ENCODE measurements at regions of chr11 and their contacts with region 1.

Region 1: GRCh38 chr11:61814958-61815789 is 1.6 kb downstream of the FADS1 start:
- DNase-seq: peak; percentile 85
- ATAC-seq: peak; percentile 90
- H3K4me3 ChIP-seq: peak overlapping the region; percentile 69 to 91
- H3K27ac ChIP-seq: peak overlapping the region; percentile 95
- H3K4me1 ChIP-seq: peaks cover 17% of the 10 kb centered on the region
- H3K27me3 ChIP-seq: no peaks in the 10 kb centered on the region
- CTCF ChIP-seq: no peak

Region 2: GRCh38 chr11:61797263-61797944 is 17.8 kb before region 1 on chr11:
- CTCF ChIA-PET with region 1: interaction called, 10 read pairs
- POLR2A ChIA-PET with region 1: interaction called, 8 read pairs
- in situ Hi-C with region 1: no loop called
- intact Hi-C with region 1: no loop called
- DNase-seq: peak; percentile 67
- ATAC-seq: no peak
- H3K4me3 ChIP-seq: no peak overlapping the region
- H3K27ac ChIP-seq: 0 out of 2 replicates have a peak overlapping the region, but pooled peaks have one; percentile 27
- H3K4me1 ChIP-seq: peaks cover 9% of the 10 kb centered on the region; the same call in 1 of the 2 replicates
- H3K27me3 ChIP-seq: no peaks in the 10 kb centered on the region
- CTCF ChIP-seq: peak; percentile 82

Region 3: GRCh38 chr11:61827571-61828378 is 12.6 kb after region 1 on chr11 and contains the start of gene FADS2:
- CTCF ChIA-PET with region 1: no interaction called
- POLR2A ChIA-PET with region 1: interaction called, 10 read pairs
- in situ Hi-C with region 1: no loop called
- intact Hi-C with region 1: no loop called
- DNase-seq: no peak
- ATAC-seq: peak; percentile 88
- H3K4me3 ChIP-seq: peak within 1 kb of the TSS; percentile 81 to 82
- H3K27ac ChIP-seq: peak within 1 kb of the TSS; percentile 92
- H3K4me1 ChIP-seq: peaks cover 33% of the 10 kb centered on the region
- H3K27me3 ChIP-seq: no peaks in the 10 kb centered on the region
- CTCF ChIP-seq: no peak
- total RNA-seq, gene FADS2: 679 TPM

Measured in Panc1 (cell line).